ENCODE measurements at regions of chr4 and their contacts with region 1.

Region 1: GRCh38 chr4:85370430-85371032 is 104.4 kb upstream of the ARHGAP24 start:
- DNase-seq: no peak
- ATAC-seq: peak; percentile 67

Region 2: GRCh38 chr4:85084380-85085094 is 286.0 kb before region 1 on chr4:
- intact Hi-C with region 1: loop called (anchors 2 kb)
- DNase-seq: no peak
- ATAC-seq: no peak

Region 3: DNA sequence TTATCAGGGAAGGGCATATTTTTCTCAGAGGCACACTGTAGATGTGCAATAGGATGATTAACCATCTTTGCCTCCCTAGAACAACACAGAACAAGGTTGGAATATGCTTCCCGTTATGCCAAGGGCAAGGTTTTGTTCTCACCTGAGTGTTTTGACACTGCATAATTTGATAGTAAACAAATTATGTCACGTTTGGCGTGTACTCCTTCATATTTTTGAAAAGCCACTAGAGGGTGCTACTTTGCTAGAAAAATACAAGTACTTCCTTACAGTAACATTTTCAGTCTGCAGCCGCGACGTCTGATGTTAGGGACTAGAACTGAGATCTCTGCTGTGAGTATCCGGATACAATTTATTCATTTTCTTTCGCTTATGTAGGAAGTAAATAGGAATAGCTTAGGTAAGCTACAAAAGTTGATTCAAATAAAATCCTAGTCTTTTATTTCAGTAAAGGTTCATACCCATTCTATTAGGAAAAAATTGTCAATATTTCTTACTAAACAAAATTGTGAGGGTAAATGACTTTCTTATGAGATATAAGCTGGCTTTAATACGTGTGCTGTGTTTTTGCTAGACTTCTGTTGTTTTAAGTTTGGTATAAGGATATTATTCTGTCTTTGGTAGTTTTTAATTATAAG is 223.0 kb before region 1 on chr4:
- intact Hi-C with region 1: loop called (anchors 5 kb)
- DNase-seq: peak; percentile 84
- ATAC-seq: peak; percentile 74

Region 4: GRCh38 chr4:85218756-85219155 is 151.8 kb before region 1 on chr4:
- intact Hi-C with region 1: no loop called
- DNase-seq: no peak
- ATAC-seq: no peak

Measured in Right ventricle myocardium inferior (tissue), 1 donor.